ENCODE measurements at regions of chr4 and their contacts with region 1.

Region 1: GRCh38 chr4:73258686-73259570 is at the start of gene ANKRD17:
- DNase-seq: peak; percentile 97
- H3K4me3 ChIP-seq: peak within 1 kb of the TSS; percentile 61 to 93 (median 91)
- H3K27ac ChIP-seq: peak within 1 kb of the TSS; percentile 91
- H3K4me1 ChIP-seq: peaks cover 19% of the 10 kb centered on the region
- H3K27me3 ChIP-seq: no peaks in the 10 kb centered on the region
- CTCF ChIP-seq: no peak
- POLR2A ChIP-seq: peak; percentile 88
- total RNA-seq, gene ANKRD17: 64.4 and 67.7 TPM in 2 replicates

Region 2: GRCh38 chr4:72701987-72702819 is 556.7 kb before region 1 on chr4:
- CTCF ChIA-PET with region 1: no interaction called
- POLR2A ChIA-PET with region 1: no interaction called
- dilution Hi-C with region 1: no loop called
- intact Hi-C with region 1: loop called (anchors 1 kb)
- DNase-seq: peak; percentile 69
- H3K4me3 ChIP-seq: peak overlapping the region; percentile 30 to 85 (median 73)
- H3K27ac ChIP-seq: peak overlapping the region; percentile 1
- H3K4me1 ChIP-seq: no peaks in the 10 kb centered on the region
- H3K27me3 ChIP-seq: no peaks in the 10 kb centered on the region
- CTCF ChIP-seq: peak; percentile 30 to 47
- POLR2A ChIP-seq: no peak

Region 3: DNA sequence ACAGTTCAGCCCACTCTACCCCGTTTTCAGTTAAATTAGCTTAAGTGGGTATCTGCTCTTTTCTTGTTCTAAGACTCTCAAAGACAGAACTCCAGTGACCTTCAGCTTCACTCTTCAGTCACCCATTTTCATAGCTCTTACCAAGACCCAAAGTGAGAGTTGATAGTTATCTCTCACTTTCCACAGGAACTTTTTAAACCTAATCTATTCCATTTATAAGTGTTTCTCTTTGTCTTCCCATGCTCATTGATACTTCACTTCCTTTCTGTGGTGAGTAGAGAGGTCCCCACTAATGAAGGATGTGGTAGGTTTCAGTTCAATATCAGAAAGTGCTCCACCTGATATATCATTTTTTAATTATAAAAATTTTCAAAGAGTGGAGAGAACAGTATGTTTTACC is 222.8 kb before region 1 on chr4:
- CTCF ChIA-PET with region 1: interaction called, 29 read pairs
- POLR2A ChIA-PET with region 1: interaction called, 12 read pairs
- dilution Hi-C with region 1: no loop called
- intact Hi-C with region 1: loop called (anchors 1 kb)
- DNase-seq: no peak
- H3K4me3 ChIP-seq: no peak overlapping the region
- H3K27ac ChIP-seq: no peak overlapping the region
- H3K4me1 ChIP-seq: no peaks in the 10 kb centered on the region
- H3K27me3 ChIP-seq: peaks cover 0 to 3% of the 10 kb centered on the region in 2 experiments
- CTCF ChIP-seq: no peak
- POLR2A ChIP-seq: no peak

Region 4: GRCh38 chr4:73127839-73128453 is 131.0 kb before region 1 on chr4:
- CTCF ChIA-PET with region 1: interaction called, 29 read pairs
- POLR2A ChIA-PET with region 1: no interaction called
- dilution Hi-C with region 1: no loop called
- intact Hi-C with region 1: loop called (anchors 1 kb)
- DNase-seq: peak; percentile 17
- H3K4me3 ChIP-seq: no peak overlapping the region
- H3K27ac ChIP-seq: no peak overlapping the region
- H3K4me1 ChIP-seq: peaks cover 9% of the 10 kb centered on the region
- H3K27me3 ChIP-seq: no peaks in the 10 kb centered on the region
- CTCF ChIP-seq: peak; percentile 6 to 28
- POLR2A ChIP-seq: no peak

Region 5: GRCh38 chr4:73187325-73187724 is 71.6 kb before region 1 on chr4:
- CTCF ChIA-PET with region 1: interaction called, 3 read pairs
- POLR2A ChIA-PET with region 1: no interaction called
- dilution Hi-C with region 1: no loop called
- intact Hi-C with region 1: loop called (anchors 1 kb)
- DNase-seq: peak; percentile 92
- H3K4me3 ChIP-seq: peak overlapping the region in 1 of 3 experiments; percentile 53
- H3K27ac ChIP-seq: peak overlapping the region; percentile 73
- H3K4me1 ChIP-seq: peaks cover 18% of the 10 kb centered on the region
- H3K27me3 ChIP-seq: no peaks in the 10 kb centered on the region
- CTCF ChIP-seq: no peak
- POLR2A ChIP-seq: peak; percentile 15

Region 6: DNA sequence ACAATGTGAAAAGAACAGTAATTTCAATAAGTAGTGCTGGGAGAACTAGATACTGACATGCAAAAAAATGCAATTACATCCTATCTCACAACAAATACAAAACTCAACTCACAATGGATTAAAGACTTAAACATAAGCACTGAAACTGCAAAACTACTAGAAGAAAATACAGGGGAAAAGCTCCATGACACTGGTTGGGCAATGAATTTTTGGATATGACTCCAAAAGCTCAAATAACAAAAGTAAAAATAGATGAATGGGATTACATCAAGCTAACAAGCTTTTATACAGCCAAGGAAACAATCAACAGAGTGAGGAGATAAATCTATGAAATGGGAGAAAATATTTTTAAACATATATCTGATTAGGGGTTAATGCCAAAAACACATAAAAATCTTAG is 53.4 kb before region 1 on chr4:
- CTCF ChIA-PET with region 1: no interaction called
- POLR2A ChIA-PET with region 1: no interaction called
- dilution Hi-C with region 1: no loop called
- intact Hi-C with region 1: no loop called
- DNase-seq: no peak
- H3K4me3 ChIP-seq: no peak overlapping the region
- H3K27ac ChIP-seq: no peak overlapping the region
- H3K4me1 ChIP-seq: peaks cover 6% of the 10 kb centered on the region
- H3K27me3 ChIP-seq: no peaks in the 10 kb centered on the region
- CTCF ChIP-seq: no peak
- POLR2A ChIP-seq: no peak

Region 7: DNA sequence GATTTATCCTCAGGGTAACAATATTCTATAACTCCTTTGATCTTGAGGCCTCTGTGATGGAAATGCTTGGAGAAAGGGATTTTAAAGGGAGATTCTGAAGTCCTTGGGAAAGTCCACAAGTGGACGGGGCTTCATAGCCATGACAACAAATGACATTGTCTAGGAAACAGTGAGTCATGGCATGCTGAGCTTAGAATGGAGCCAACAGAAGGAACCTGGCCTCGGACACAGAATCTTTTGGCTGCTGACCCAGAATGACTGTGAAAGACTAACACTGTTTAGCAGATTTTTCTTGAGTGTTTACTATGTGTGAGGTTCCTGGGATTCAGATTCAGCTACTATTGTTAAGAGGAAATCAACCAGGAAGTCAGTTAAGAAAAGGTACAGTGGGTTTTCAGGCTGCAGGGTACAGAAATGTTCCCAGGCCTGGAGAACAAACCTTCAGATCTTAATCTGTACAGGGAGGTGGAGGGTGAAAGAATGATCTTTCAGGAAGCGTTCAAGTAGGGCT is 858.2 kb after region 1 on chr4:
- CTCF ChIA-PET with region 1: no interaction called
- POLR2A ChIA-PET with region 1: no interaction called
- dilution Hi-C with region 1: no loop called
- intact Hi-C with region 1: loop called (anchors 5 kb)
- DNase-seq: peak; percentile 99
- H3K4me3 ChIP-seq: no peak overlapping the region
- H3K27ac ChIP-seq: peak overlapping the region; percentile 91
- H3K4me1 ChIP-seq: peaks cover 18% of the 10 kb centered on the region
- H3K27me3 ChIP-seq: no peaks in the 10 kb centered on the region
- CTCF ChIP-seq: no peak
- POLR2A ChIP-seq: no peak